ENCODE measurements at regions of chr5 and their contacts with region 1.

Region 1: GRCh38 chr5:6291961-6292360 is 86.4 kb downstream of the MED10 start:
- DNase-seq: peak; percentile 68
- H3K4me3 ChIP-seq: no peak overlapping the region
- H3K27ac ChIP-seq: no peak overlapping the region
- H3K4me1 ChIP-seq: no peaks in the 10 kb centered on the region
- H3K27me3 ChIP-seq: peaks cover 32% of the 10 kb centered on the region
- CTCF ChIP-seq: peak; percentile 49

Region 2: GRCh38 chr5:6280425-6281100 is 11.4 kb before region 1 on chr5:
- CTCF ChIA-PET with region 1: no interaction called
- POLR2A ChIA-PET with region 1: interaction called, 14 read pairs
- intact Hi-C with region 1: no loop called
- DNase-seq: no peak
- H3K4me3 ChIP-seq: no peak overlapping the region
- H3K27ac ChIP-seq: no peak overlapping the region
- H3K4me1 ChIP-seq: no peaks in the 10 kb centered on the region
- H3K27me3 ChIP-seq: peaks cover 38% of the 10 kb centered on the region
- CTCF ChIP-seq: no peak

Region 3: DNA sequence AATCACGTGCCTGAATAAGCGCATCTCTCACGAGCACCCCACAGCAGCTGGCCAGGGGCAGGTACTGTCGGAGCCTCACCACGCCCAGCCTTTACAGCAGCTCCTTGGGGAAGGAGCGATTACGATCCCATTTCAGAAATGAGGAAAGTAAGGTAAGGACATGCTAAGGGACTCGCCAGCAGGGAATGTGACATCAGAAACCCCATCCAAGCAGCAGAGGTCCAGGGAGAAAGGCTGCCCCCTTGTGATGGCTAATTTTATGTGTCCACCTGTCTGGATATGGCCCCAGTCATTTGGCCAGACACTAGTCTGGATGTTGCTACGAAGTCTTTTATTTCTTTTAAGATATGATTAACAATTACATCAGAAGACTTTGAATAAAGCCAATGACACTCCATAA is 233.9 kb after region 1 on chr5:
- CTCF ChIA-PET with region 1: no interaction called
- POLR2A ChIA-PET with region 1: no interaction called
- intact Hi-C with region 1: loop called (anchors 2 kb)
- DNase-seq: peak; percentile 52
- H3K4me3 ChIP-seq: no peak overlapping the region
- H3K27ac ChIP-seq: no peak overlapping the region
- H3K4me1 ChIP-seq: no peaks in the 10 kb centered on the region
- H3K27me3 ChIP-seq: peaks cover 3% of the 10 kb centered on the region
- CTCF ChIP-seq: peak; percentile 48

Region 4: GRCh38 chr5:6576861-6577501 is 285.0 kb after region 1 on chr5:
- CTCF ChIA-PET with region 1: no interaction called
- POLR2A ChIA-PET with region 1: no interaction called
- intact Hi-C with region 1: loop called (anchors 1 kb)
- DNase-seq: peak; percentile 77
- H3K4me3 ChIP-seq: no peak overlapping the region
- H3K27ac ChIP-seq: no peak overlapping the region
- H3K4me1 ChIP-seq: no peaks in the 10 kb centered on the region
- H3K27me3 ChIP-seq: peaks cover 67% of the 10 kb centered on the region
- CTCF ChIP-seq: peak; percentile 72

Region 5: DNA sequence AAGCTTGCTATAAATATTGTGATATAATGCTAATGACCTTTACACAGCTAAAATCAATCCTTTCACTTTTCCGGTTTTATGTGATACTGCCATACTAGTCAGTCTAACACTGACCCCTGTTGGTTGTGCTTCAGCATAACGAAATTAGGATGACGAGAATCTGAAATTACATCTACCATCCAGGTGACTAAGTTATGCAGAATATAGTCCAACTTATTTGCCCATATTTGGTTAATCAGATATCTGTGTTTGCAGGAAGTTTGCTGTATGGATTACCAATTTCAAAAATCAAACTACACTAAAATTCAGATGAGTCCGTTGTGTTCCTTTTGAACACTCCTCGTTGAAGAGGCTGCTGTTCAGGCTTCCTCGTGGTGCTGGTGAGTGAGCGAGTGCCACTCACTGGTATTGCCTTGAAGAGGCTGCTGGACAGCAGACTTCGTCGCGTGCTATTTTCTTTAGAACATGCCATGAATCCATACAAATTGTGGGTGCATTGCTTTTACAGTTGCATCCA is 453.8 kb after region 1 on chr5:
- CTCF ChIA-PET with region 1: no interaction called
- POLR2A ChIA-PET with region 1: no interaction called
- intact Hi-C with region 1: loop called (anchors 10 kb)
- DNase-seq: peak; percentile 63
- H3K4me3 ChIP-seq: no peak overlapping the region
- H3K27ac ChIP-seq: no peak overlapping the region
- H3K4me1 ChIP-seq: peaks cover 15% of the 10 kb centered on the region
- H3K27me3 ChIP-seq: no peaks in the 10 kb centered on the region
- CTCF ChIP-seq: peak; percentile 78

Region 6: GRCh38 chr5:6875336-6875735 is 583.4 kb after region 1 on chr5:
- CTCF ChIA-PET with region 1: no interaction called
- POLR2A ChIA-PET with region 1: no interaction called
- intact Hi-C with region 1: no loop called
- DNase-seq: no peak
- H3K4me3 ChIP-seq: no peak overlapping the region
- H3K27ac ChIP-seq: no peak overlapping the region
- H3K4me1 ChIP-seq: no peaks in the 10 kb centered on the region
- H3K27me3 ChIP-seq: peaks cover 17% of the 10 kb centered on the region
- CTCF ChIP-seq: no peak